Activated CD4-positive, alpha-beta memory T cell treated with anti-CD3 and anti-CD28 coated beads for 36 hours (primary cell): ENCODE measurements at regions of chr18 and their contacts with region 1.

Region 1: DNA sequence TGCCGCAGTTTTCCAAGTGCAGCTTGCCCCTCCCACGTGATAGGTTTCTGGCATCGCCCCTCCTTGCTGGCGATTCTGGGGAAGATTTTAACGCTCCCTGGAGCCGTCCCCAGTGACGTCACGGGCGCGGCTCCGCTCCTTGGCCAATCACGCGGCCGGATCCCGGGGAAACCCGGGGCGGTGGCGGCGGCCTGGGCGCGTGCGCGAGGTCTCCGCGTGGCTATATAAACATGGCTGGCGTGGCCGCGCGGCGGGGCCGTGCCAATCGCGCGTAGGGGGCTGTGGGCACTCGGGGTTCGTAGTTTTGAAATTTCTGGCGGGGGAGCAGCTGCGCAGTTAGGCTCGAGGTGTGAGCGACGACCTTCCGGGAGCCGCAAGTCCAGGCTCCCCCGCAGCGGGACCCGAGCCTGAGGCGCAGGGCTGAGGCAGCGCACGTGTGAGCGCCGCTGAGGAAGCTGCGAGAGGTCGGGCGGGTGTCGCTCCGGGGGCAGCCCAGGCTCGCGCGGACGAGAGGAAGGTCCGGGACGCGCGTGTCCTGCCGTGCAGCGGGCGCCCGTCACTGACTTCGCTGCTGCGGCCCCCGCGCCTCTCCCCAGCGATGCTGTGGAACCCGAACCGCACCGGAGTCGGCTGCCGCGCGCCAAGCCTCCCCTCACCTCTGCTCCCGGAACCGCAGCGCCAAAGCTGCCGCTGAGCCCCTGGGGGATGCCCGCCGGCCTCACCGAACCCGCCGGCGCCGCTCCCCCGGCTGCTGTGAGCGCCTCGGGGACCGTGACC is at the start of gene TAF4B:
- DNase-seq: peak; percentile 95
- H3K4me3 Mint-ChIP-seq: peak within 1 kb of the TSS; percentile 90
- H3K27ac Mint-ChIP-seq: peak within 1 kb of the TSS; percentile 94
- H3K4me1 Mint-ChIP-seq: peaks cover 35% of the 10 kb centered on the region
- H3K27me3 Mint-ChIP-seq: no peaks in the 10 kb centered on the region
- total RNA-seq, gene TAF4B: 12.5 to 12.7 TPM

Region 2: GRCh38 chr18:26190506-26190905 is 35.9 kb before region 1 on chr18:
- CTCF ChIA-PET with region 1: no interaction called
- POLR2A ChIA-PET with region 1: no interaction called
- intact Hi-C with region 1: loop called (anchors 5 kb)
- DNase-seq: peak; percentile 49
- H3K4me3 Mint-ChIP-seq: peak overlapping the region; percentile 73
- H3K27ac Mint-ChIP-seq: peak overlapping the region; percentile 65
- H3K4me1 Mint-ChIP-seq: peaks cover 15% of the 10 kb centered on the region
- H3K27me3 Mint-ChIP-seq: no peaks in the 10 kb centered on the region

Region 3: GRCh38 chr18:26215247-26215970 is 11.0 kb before region 1 on chr18:
- CTCF ChIA-PET with region 1: no interaction called
- POLR2A ChIA-PET with region 1: interaction called, 18 read pairs
- intact Hi-C with region 1: loop called (anchors 1 kb)
- DNase-seq: peak; percentile 69
- H3K4me3 Mint-ChIP-seq: peak overlapping the region; percentile 56
- H3K27ac Mint-ChIP-seq: peak overlapping the region; percentile 83
- H3K4me1 Mint-ChIP-seq: peaks cover 21% of the 10 kb centered on the region
- H3K27me3 Mint-ChIP-seq: no peaks in the 10 kb centered on the region